Dorsolateral prefrontal cortex (tissue), 120 donors: ENCODE measurements at regions of chr1 and their contacts with region 1.

Region 1: GRCh38 chr1:180533266-180533987 is 25.3 kb upstream of the OVAAL start:
- DNase-seq: peak in 9 of 10 donors; percentile 31 to 73 (median 60)
- H3K4me3 ChIP-seq: peak overlapping the region in 24 of 59 donors; percentile 2 to 49 (median 24)
- H3K27ac ChIP-seq: peak overlapping the region in 2 of 59 donors; percentile 9 to 15
- H3K27me3 ChIP-seq: no peaks in the 10 kb centered on the region
- CTCF ChIP-seq: peak; percentile 58 to 93 (median 84)

Region 2: DNA sequence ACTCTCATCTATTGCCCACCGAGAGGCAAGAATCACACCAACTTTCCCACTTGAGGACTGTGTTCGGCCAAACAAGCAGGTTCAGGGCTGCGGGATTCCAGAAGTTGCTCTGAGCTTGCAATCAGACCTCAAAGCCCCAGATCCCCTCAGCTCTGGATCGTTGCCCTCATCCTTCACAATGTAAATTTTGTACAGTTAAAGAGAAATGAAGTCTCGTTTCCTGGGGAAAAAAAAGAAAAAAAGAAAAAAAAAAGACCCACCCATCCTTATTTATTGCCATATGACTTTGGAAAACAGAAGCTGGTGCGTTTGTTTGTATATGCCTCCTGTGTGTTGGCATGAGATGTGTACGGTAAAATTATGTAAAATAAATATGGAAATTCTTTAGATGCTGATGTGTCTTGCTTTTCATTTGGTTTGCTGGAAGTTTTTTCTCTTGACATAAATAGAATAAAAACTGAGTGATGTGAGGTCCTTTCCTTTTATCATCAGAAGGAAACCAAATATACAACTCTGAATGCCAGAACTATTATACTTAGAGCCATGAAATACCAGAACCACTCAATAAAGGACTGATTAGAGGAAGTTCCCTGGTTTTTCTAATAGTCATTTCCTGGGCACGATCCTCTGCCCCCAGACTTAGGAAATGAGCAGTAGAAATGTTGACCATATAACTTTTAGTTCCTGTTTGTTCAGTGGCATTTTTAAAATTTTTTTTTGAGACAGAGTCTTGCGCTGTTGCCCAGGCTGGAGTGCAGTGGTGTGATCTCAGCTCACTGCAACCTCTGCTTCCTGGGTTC is 254.6 kb before region 1 on chr1:
- intact Hi-C with region 1: no loop called
- DNase-seq: no peak
- H3K4me3 ChIP-seq: no peak overlapping the region
- H3K27ac ChIP-seq: no peak overlapping the region
- H3K27me3 ChIP-seq: no peaks in the 10 kb centered on the region
- CTCF ChIP-seq: no peak

Region 3: GRCh38 chr1:180863158-180863775 is 329.8 kb after region 1 on chr1:
- intact Hi-C with region 1: loop called (anchors 5 kb)
- DNase-seq: peak in 1 of 10 donors; percentile 16
- H3K4me3 ChIP-seq: no peak overlapping the region
- H3K27ac ChIP-seq: no peak overlapping the region
- H3K27me3 ChIP-seq: no peaks in the 10 kb centered on the region
- CTCF ChIP-seq: peak; percentile 80 to 99 (median 89)

Region 4: DNA sequence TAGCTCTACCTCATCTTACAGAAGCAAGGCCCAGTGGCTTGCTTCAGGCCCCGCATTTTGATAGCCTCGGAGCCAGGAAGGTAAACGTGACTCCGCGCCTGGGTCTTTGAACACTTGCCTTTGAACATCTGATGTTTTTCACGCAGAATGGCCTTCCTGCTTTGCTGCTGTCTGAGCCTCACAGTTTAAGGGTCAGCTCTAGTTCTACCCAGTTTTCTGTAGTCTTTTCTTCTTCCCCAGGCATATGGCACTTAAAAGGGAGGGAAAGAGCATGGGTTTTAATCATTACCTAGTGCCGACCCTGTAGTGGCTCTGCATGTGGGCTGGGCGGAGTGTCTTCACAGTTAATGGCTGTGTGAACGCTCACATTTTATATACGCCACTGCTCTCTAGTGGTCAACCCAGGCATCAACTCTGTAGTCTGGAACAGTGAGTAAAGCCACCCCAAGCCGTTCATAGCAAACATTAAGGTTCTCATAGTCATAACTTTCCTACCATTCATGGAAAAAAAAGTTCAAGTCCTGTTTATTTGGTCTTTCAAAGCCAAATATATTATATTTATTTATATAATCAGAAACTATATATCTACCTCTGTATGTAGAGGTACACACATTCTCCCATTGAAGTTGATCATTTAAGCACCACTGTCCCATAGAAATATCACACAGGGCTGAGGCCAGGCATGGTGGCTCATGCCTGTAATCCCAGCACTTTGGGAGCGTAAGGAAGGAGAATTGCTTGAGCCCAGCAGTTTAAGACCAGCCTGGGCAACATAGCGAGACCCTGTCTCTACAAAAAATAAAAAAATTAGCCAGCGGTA is 633.2 kb after region 1 on chr1:
- intact Hi-C with region 1: loop called in 1 of 2 experiments (anchors 5 kb)
- DNase-seq: peak in 8 of 10 donors; percentile 57 to 87 (median 65)
- H3K4me3 ChIP-seq: peak overlapping the region in 3 of 59 donors; percentile 3 to 22 (median 21)
- H3K27ac ChIP-seq: peak overlapping the region in 1 of 59 donors; percentile 13
- H3K27me3 ChIP-seq: no peaks in the 10 kb centered on the region
- CTCF ChIP-seq: peak; percentile 54 to 94 (median 87)